ENCODE measurements at regions of chr16 and their contacts with region 1.

Region 1: DNA sequence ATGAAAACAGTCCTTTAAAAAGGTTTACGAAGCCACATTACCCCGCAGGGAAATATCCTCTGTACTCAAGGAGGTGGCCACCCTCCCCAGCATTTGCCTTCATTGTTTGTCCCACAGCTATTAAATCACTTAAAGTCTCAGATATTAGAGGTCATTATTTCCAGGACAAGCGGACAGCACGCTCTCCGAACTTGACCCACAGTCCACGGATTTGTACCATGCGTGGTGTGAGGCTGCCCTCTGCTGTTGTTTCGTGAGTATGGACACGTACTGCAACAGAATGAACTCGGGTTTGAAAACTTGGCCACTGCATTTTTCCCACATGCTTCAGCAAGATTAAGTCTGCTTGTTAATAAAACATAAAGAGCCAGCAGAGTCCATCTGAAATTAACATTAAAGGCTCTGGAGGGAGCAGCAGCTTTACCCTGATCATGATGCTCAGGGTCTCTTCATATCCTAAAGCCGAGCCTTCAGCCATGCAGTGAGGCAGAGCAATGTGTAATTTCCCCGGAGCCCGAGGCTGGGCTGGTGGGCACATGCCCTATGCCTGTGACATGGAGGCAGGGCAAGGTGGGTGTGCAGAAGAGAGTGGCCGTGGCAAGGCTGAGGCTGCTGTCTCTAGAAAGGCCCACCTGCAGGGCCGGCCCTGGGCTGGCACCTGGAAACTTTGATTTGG is 19.7 kb downstream of the MEAK7 start:
- DNase-seq: peak; percentile 68 to 89 (median 78)
- H3K4me3 ChIP-seq: peak overlapping the region in 1 of 59 donors; percentile 32
- H3K27ac ChIP-seq: peak overlapping the region in 23 of 59 donors; percentile 5 to 72 (median 52)
- H3K27me3 ChIP-seq: no peaks in the 10 kb centered on the region
- CTCF ChIP-seq: peak; percentile 64 to 96 (median 88)

Region 2: DNA sequence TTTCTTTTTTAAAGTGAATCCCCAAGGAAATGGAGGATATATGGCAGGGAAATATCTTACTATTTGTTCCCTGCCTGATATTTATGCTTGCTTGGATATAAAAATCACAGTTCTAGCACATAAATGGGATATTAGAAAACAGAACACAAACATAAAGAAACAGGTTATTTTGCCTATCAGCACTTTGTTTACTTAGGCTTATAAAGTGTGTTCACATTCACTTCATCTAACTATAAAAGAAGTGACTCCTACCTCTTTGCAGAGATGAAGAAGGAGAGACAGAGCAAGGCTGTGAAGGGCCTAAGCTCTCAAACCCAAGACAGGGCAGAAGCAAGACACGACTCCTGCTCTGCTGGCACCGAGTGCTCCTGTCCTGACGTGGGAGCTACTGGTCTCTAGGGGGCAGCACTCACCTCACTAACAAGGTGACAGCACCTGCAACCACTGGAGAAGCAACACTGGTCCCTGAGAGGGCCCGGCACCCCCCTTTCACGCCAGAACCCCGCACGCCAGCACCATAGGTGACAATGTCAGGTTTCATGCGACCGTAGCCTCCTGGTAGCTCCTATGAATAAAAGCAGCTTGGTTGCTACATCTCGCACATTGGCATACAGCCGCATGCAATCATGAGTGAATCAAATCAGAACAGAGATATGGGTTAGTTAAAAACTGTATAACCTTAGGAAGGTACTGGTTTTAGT is 400.0 kb before region 1 on chr16:
- intact Hi-C with region 1: loop called in 1 of 2 experiments (anchors 10 kb)
- DNase-seq: peak in 2 of 10 donors; percentile 52 to 53
- H3K4me3 ChIP-seq: no peak overlapping the region
- H3K27ac ChIP-seq: peak overlapping the region in 7 of 59 donors; percentile 14 to 74 (median 46)
- H3K27me3 ChIP-seq: no peaks in the 10 kb centered on the region
- CTCF ChIP-seq: peak; percentile 19 to 76 (median 60)